Activated B cell treated with CpG ODN at 0.5 μM for 24 hours (primary cell): ENCODE measurements at regions of chr15 and their contacts with region 1.

Region 1: GRCh38 chr15:89485855-89486361 is 10.5 kb downstream of the RHCG start:
- DNase-seq: no peak
- ATAC-seq: no peak
- H3K4me3 Mint-ChIP-seq: no peak overlapping the region
- H3K27ac Mint-ChIP-seq: no peak overlapping the region
- H3K4me1 Mint-ChIP-seq: peaks cover 17% of the 10 kb centered on the region
- H3K27me3 Mint-ChIP-seq: peaks cover 39% of the 10 kb centered on the region
- CTCF ChIP-seq: no peak

Region 2: GRCh38 chr15:89150762-89151664 is 334.9 kb before region 1 on chr15:
- CTCF ChIA-PET with region 1: no interaction called
- POLR2A ChIA-PET with region 1: no interaction called
- intact Hi-C with region 1: no loop called
- DNase-seq: no peak
- ATAC-seq: no peak
- H3K4me3 Mint-ChIP-seq: no peak overlapping the region
- H3K27ac Mint-ChIP-seq: no peak overlapping the region
- H3K4me1 Mint-ChIP-seq: no peaks in the 10 kb centered on the region
- H3K27me3 Mint-ChIP-seq: no peaks in the 10 kb centered on the region
- CTCF ChIP-seq: no peak

Region 3: DNA sequence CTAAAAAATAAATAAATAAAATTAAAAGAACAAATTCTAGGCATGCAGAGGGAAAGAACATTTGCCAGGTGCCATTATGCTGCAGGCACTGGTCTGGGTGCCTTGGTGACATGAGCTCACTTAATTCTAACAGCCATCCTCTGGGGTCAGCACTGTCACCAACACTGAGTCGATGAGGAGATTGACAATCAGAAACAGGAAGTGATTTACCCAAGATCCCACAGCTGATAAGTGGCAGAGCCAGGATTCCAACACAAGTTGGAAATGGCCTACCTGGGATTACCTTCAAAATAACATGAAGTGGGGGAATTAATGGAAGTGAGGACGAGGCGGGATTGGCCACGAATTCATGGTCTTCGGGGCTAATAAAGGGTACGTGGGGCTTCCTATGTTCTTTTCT is 189.7 kb after region 1 on chr15:
- CTCF ChIA-PET with region 1: no interaction called
- POLR2A ChIA-PET with region 1: interaction called, 15 read pairs
- intact Hi-C with region 1: no loop called
- DNase-seq: no peak
- ATAC-seq: no peak
- H3K4me3 Mint-ChIP-seq: no peak overlapping the region
- H3K27ac Mint-ChIP-seq: no peak overlapping the region
- H3K4me1 Mint-ChIP-seq: no peaks in the 10 kb centered on the region
- H3K27me3 Mint-ChIP-seq: no peaks in the 10 kb centered on the region
- CTCF ChIP-seq: no peak